CD4-positive, alpha-beta memory T cell (primary cell): ENCODE measurements at regions of chr15 and their contacts with region 1.

Region 1: GRCh38 chr15:62254137-62254934 is 89.3 kb upstream of the C2CD4B start:
- DNase-seq: peak; percentile 42 to 57 (median 55)
- H3K4me3 ChIP-seq: no peak overlapping the region
- H3K4me3 Mint-ChIP-seq: no peak overlapping the region
- H3K27ac ChIP-seq: no peak overlapping the region
- H3K27ac Mint-ChIP-seq: no peak overlapping the region
- H3K4me1 ChIP-seq: no peaks in the 10 kb centered on the region
- H3K4me1 Mint-ChIP-seq: peaks cover 0 to 3% (median 0%) of the 10 kb centered on the region in 4 donors
- H3K27me3 ChIP-seq: no peaks in the 10 kb centered on the region
- H3K27me3 Mint-ChIP-seq: peaks cover 2 to 5% of the 10 kb centered on the region in 2 donors

Region 2: DNA sequence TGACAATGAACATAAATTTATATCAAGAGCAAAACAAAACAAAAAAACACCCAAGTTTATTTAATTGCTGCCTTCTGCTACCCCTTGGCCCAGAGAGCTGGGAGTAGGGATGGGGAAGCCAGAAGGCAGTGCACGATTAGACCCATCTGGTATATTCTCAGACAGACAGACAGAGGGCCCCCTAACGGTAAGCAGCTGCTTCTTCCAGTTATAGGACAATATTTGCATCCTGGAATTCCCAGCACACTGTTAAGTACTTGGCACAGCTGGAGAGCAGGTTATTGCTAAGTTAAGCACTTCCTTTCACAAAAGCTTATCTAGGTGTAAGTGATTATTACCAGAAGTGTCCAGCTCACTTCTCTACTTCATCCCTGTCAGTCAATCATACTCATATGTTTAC is 128.6 kb before region 1 on chr15:
- CTCF ChIA-PET with region 1: interaction called, 18 read pairs
- POLR2A ChIA-PET with region 1: no interaction called
- intact Hi-C with region 1: loop called (anchors 5 kb)
- DNase-seq: no peak
- H3K4me3 ChIP-seq: no peak overlapping the region
- H3K4me3 Mint-ChIP-seq: peak overlapping the region in 2 of 8 donors; percentile 1 to 33
- H3K27ac ChIP-seq: no peak overlapping the region
- H3K27ac Mint-ChIP-seq: peak overlapping the region; percentile 16 to 82 (median 68)
- H3K4me1 ChIP-seq: peaks cover 67% of the 10 kb centered on the region
- H3K4me1 Mint-ChIP-seq: peaks cover 50 to 75% (median 62%) of the 10 kb centered on the region in 4 donors
- H3K27me3 ChIP-seq: no peaks in the 10 kb centered on the region
- H3K27me3 Mint-ChIP-seq: no peaks in the 10 kb centered on the region